PC-3 (cell line): ENCODE measurements at regions of chr9 and their contacts with region 1.

Region 1: GRCh38 chr9:123568691-123569688 is 213.0 kb downstream of the CRB2 start:
- DNase-seq: no peak
- ATAC-seq: peak; percentile 53
- H3K4me3 ChIP-seq: no peak overlapping the region
- H3K27ac ChIP-seq: no peak overlapping the region
- H3K4me1 ChIP-seq: no peaks in the 10 kb centered on the region
- H3K27me3 ChIP-seq: no peaks in the 10 kb centered on the region
- CTCF ChIP-seq: no peak

Region 2: DNA sequence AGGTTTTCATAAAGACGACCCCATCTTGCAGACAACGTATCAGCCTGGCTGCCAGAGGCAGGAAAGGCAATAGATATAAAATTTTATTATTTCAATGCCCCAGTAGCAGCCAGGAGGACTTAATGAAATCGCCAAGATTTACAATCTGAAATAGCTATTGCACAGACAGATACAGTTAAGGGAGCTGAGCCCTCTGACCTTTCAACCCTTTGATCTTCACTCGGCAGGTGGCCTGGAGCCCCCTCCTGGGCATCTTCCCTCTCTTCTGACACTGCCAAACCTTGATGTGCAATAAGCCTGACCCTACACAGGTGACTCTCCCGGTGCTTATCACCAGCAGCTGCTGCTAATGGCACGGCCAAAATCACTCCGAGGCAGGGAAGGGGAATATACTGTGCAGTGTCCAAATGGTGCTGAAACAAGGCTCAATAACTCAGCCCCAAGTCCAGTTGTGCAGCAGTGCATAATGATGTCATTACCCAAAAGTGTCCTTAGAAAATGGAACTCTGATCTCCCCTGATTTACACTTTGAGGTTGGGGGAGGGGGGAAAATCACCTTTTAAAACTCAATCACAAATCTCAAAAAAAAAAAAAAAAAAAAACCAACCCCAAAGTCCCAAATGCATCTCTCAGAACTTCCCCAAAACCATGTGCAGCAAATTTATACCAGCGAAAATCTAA is 29.0 kb after region 1 on chr9:
- CTCF ChIA-PET with region 1: no interaction called
- POLR2A ChIA-PET with region 1: interaction called, 14 read pairs
- intact Hi-C with region 1: no loop called
- DNase-seq: no peak
- ATAC-seq: no peak
- H3K4me3 ChIP-seq: no peak overlapping the region
- H3K27ac ChIP-seq: no peak overlapping the region
- H3K4me1 ChIP-seq: no peaks in the 10 kb centered on the region
- H3K27me3 ChIP-seq: no peaks in the 10 kb centered on the region
- CTCF ChIP-seq: no peak